ENCODE measurements at regions of chr1 and their contacts with region 1.

Region 1: DNA sequence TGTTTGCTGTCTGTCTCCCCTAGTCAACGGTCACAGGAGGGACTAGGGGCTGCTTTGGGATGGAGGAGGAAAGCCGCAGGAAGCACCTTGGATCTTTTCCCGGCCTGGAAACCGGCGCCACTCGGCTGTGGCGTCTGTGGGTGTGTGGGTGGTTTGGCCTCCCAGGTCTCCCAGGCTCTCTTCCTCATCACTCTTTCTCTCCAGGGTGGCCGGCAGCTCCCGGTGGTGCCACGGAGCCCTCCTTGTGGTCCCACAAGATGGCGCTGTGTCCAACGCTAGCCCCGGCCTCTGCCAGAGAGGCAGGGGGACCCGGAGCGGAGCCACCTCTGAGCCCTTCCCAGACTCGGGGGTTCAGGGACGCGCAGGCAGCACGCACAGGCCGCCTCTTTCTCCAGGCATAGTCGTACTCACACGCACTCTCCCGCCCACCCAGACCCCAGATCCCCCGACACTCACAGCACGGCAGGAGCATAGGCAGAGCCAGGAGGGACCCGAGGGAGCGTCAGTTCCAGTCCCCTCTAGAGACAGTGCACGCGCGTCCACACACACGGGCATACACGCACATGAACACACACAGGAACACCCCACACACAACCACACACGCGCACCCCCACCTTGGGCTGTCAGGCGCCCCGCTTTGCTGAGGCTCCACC is 31.2 kb downstream of the CDCP2 start:
- DNase-seq: peak; percentile 79
- ATAC-seq: peak; percentile 94
- H3K4me3 Mint-ChIP-seq: no peak overlapping the region
- H3K27ac Mint-ChIP-seq: no peak overlapping the region
- H3K4me1 Mint-ChIP-seq: peaks cover 8% of the 10 kb centered on the region
- H3K27me3 Mint-ChIP-seq: peaks cover 3% of the 10 kb centered on the region
- CTCF ChIP-seq: peak; percentile 78

Region 2: GRCh38 chr1:54110996-54111395 is 10.6 kb before region 1 on chr1:
- CTCF ChIA-PET with region 1: interaction called, 19 read pairs
- POLR2A ChIA-PET with region 1: no interaction called
- intact Hi-C with region 1: no loop called
- DNase-seq: no peak
- ATAC-seq: no peak
- H3K4me3 Mint-ChIP-seq: no peak overlapping the region
- H3K27ac Mint-ChIP-seq: no peak overlapping the region
- H3K4me1 Mint-ChIP-seq: no peaks in the 10 kb centered on the region
- H3K27me3 Mint-ChIP-seq: no peaks in the 10 kb centered on the region
- CTCF ChIP-seq: no peak

Region 3: GRCh38 chr1:54180701-54181360 is 59.2 kb after region 1 on chr1:
- CTCF ChIA-PET with region 1: interaction called, 15 read pairs
- POLR2A ChIA-PET with region 1: no interaction called
- intact Hi-C with region 1: no loop called
- DNase-seq: no peak
- ATAC-seq: no peak
- H3K4me3 Mint-ChIP-seq: no peak overlapping the region
- H3K27ac Mint-ChIP-seq: no peak overlapping the region
- H3K4me1 Mint-ChIP-seq: no peaks in the 10 kb centered on the region
- H3K27me3 Mint-ChIP-seq: no peaks in the 10 kb centered on the region
- CTCF ChIP-seq: no peak